Spleen (tissue), 13 donors: ENCODE measurements at regions of chr3 and their contacts with region 1.

Region 1: GRCh38 chr3:65439641-65440284 is 599.0 kb downstream of the MAGI1 start:
- DNase-seq: no peak
- H3K4me3 ChIP-seq: no peak overlapping the region
- H3K27ac ChIP-seq: no peak overlapping the region
- H3K4me1 ChIP-seq: peaks cover 0 to 13% (median 0%) of the 10 kb centered on the region in 6 donors
- H3K27me3 ChIP-seq: no peaks in the 10 kb centered on the region
- CTCF ChIP-seq: peak in 6 of 11 experiments; percentile 24 to 42 (median 38)
- POLR2A ChIP-seq: no peak

Region 2: GRCh38 chr3:65732051-65732935 is 292.5 kb after region 1 on chr3:
- intact Hi-C with region 1: loop called (anchors 10 kb)
- DNase-seq: no peak
- H3K4me3 ChIP-seq: no peak overlapping the region
- H3K27ac ChIP-seq: no peak overlapping the region
- H3K4me1 ChIP-seq: peaks cover 0 to 28% (median 22%) of the 10 kb centered on the region in 6 donors
- H3K27me3 ChIP-seq: no peaks in the 10 kb centered on the region
- CTCF ChIP-seq: peak in 10 of 11 experiments; percentile 25 to 75 (median 58)
- POLR2A ChIP-seq: no peak